K562 (cell line): ENCODE measurements at regions of chr10 and their contacts with region 1.

Region 1: DNA sequence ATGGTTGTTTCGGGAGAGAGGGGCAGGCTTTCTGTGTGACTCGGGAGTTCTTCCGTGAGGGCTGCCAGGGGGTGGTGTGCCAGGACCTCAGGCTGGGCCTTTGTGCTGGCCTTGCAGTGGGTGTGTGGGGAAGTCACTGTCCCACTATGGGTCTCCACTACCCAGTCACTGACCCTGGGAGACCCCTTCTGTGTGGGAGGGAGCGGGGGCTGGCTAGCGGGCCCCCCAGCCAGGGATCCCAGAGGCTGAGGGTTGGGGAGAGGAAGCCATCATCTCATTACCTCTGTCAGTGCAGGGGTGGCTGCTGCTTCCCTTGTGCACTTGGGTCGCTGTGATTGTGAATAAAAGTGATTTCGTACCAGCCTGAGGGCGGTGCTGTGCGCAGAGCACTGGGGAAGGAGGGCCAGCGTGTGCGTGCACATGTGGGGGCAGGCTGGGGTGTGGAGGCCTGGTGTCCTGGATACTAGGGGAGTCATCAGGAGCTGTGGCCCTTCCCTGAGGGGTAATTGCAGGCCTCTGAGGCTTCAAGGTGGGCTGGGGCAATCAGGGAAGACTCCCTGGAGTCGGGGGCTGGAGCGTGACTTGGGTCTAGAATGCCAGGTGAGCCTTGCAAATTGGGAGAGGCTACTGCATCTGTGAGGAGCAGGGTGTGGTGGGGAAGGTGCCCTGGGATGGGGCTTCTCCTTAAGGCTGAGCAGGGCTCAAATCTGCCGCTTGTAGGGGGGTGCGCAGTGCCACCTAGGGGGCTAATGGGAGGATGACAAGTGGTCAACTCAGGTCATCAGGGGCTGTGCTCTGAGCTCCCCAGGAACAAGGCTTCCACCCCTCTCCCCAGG is 98.9 kb downstream of the NEURL1 start:
- DNase-seq: peak; percentile 61 to 80 (median 80)
- ATAC-seq: peak; percentile 97
- H3K4me3 ChIP-seq: no peak overlapping the region
- H3K27ac ChIP-seq: no peak overlapping the region
- H3K4me1 ChIP-seq: no peaks in the 10 kb centered on the region; a peak in 2 of 5 replicates
- H3K27me3 ChIP-seq: no peaks in the 10 kb centered on the region
- CTCF ChIP-seq: peak; percentile 70 to 77 (median 75)
- EP300 ChIP-seq: no peak
- POLR2A ChIP-seq: no peak
- RAD21 ChIP-seq: peak; percentile 39 to 70; a peak in 3 of 4 replicates

Region 2: DNA sequence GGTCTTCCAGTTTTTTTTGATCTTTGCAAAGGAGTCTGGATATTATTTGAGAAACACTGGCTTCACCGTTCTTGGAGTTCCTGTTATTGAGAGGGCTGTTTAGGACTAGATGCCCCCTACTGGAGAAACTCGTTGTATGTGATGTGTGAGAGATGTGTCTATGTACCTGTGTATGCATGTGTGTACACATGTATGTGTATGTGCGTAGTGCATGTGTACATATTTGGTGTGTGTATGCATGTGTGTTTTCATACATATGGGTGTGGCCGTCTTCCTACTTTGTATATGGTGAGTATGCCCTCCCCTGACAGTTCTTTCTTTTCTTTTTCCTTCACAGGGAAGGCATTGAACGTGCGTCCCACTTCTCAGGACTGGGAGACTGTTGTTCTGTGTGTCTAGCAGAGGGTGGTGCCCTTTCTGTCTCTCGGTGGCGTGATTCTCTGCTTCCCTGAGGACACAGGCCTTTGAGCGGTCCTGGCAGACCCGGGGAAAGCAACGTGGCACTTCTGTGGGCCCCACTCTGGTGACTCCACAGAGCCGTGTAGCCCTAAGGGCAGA is 110.4 kb before region 1 on chr10:
- CTCF ChIA-PET with region 1: no interaction called
- POLR2A ChIA-PET with region 1: no interaction called
- in situ Hi-C with region 1: no loop called
- intact Hi-C with region 1: loop called (anchors 5 kb)
- DNase-seq: peak; percentile 51 to 73 (median 57)
- ATAC-seq: peak; percentile 88
- H3K4me3 ChIP-seq: no peak overlapping the region
- H3K27ac ChIP-seq: no peak overlapping the region
- H3K4me1 ChIP-seq: peaks cover 0 to 10% of the 10 kb centered on the region in 2 experiments; a peak in 2 of 5 replicates
- H3K27me3 ChIP-seq: 0 out of 5 replicates have a peak, but pooled peaks cover 0 to 3% of the 10 kb centered on the region in 2 experiments
- CTCF ChIP-seq: peak; percentile 33 to 59 (median 53); a peak in 4 of 6 replicates
- EP300 ChIP-seq: no peak
- POLR2A ChIP-seq: no peak
- RAD21 ChIP-seq: peak; percentile 41 to 62; a peak in 3 of 4 replicates

Region 3: GRCh38 chr10:103499881-103500280 is 92.5 kb before region 1 on chr10:
- CTCF ChIA-PET with region 1: no interaction called
- POLR2A ChIA-PET with region 1: no interaction called
- in situ Hi-C with region 1: no loop called
- intact Hi-C with region 1: no loop called
- DNase-seq: no peak
- ATAC-seq: no peak
- H3K4me3 ChIP-seq: no peak overlapping the region
- H3K27ac ChIP-seq: no peak overlapping the region
- H3K4me1 ChIP-seq: peaks cover 0 to 9% of the 10 kb centered on the region in 2 experiments; a peak in 4 of 5 replicates
- H3K27me3 ChIP-seq: peaks cover 15 to 43% of the 10 kb centered on the region in 2 experiments; a peak in 3 of 5 replicates
- CTCF ChIP-seq: no peak
- EP300 ChIP-seq: no peak
- POLR2A ChIP-seq: no peak
- RAD21 ChIP-seq: no peak

Region 4: DNA sequence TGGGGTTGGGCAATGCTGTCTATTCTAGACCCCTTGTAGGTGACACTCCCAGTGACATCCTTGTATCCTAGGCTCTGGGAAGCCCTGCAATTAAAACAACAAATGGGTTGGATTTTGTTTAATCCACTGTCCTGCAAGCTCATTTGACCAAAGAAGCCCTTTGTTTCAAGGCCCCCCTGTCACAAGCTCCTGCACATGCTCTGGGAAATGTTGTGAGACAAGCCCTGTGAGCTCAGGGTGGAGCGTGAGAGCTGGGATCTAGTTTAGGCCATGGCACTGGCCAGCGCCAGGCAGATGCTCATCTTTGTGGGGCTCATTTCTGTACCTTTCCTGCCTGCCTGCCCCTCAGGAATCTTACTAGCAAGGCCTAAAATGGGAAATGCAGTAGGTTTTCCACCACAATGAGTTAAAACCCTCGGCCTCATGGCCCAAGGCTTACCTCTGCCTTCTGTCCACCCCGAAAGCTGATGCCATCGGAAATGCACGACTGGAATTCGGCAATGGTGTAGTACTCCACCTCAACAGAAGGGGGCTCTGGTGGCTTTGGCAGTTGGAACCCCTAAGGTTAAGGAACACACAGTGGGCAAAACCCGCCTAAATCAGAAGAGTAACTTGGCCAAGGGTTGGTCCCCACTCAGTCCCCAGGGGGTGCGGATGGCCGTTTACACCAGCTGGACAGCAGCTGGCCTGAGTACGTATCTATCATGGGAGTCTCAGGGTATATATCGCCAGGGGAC is 13.1 kb after region 1 on chr10:
- CTCF ChIA-PET with region 1: no interaction called
- POLR2A ChIA-PET with region 1: no interaction called
- in situ Hi-C with region 1: no loop called
- intact Hi-C with region 1: no loop called
- DNase-seq: peak; percentile 52 to 65 (median 56)
- ATAC-seq: peak; percentile 84
- H3K4me3 ChIP-seq: no peak overlapping the region
- H3K27ac ChIP-seq: no peak overlapping the region
- H3K4me1 ChIP-seq: peaks cover 3 to 5% of the 10 kb centered on the region in 2 experiments; a peak in 4 of 5 replicates
- H3K27me3 ChIP-seq: no peaks in the 10 kb centered on the region
- CTCF ChIP-seq: peak; percentile 70 to 81 (median 81)
- EP300 ChIP-seq: no peak
- POLR2A ChIP-seq: no peak
- RAD21 ChIP-seq: peak; percentile 60 to 78